Stomach (tissue), 19 donors: ENCODE measurements at regions of chr11 and their contacts with region 1.

Region 1: GRCh38 chr11:62542750-62543567 is 3.6 kb downstream of the AHNAK start:
- DNase-seq: peak; percentile 80 to 93
- H3K4me3 ChIP-seq: peak overlapping the region; percentile 83 to 95 (median 88)
- H3K27ac ChIP-seq: peak overlapping the region; percentile 93 to 99 (median 96)
- H3K4me1 ChIP-seq: peaks cover 69 to 82% (median 80%) of the 10 kb centered on the region in 4 donors
- H3K27me3 ChIP-seq: no peaks in the 10 kb centered on the region
- CTCF ChIP-seq: peak in 6 of 7 experiments; percentile 94 to 100 (median 98)
- EP300 ChIP-seq: no peak
- POLR2A ChIP-seq: no peak

Region 2: DNA sequence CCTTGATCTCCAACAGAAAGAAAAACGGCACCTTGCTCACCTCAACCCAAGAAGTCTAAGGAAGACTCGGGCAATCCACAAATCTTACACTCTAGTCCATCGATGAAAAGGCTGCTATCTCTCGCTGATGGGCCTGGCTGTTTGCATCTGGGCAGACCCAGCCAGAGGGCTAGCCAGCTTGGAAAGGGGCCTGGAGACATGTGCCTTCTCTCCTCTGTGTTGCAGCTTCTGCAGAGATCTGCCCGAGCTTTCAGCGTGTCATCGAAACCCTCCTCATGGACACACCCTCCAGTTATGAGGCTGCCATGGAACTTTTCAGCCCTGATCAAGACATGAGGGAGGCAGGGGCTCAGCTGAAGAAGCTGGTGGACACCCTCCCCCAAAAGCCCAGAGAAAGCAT is 121.0 kb before region 1 on chr11:
- intact Hi-C with region 1: loop called (anchors 5 kb)
- DNase-seq: peak in 1 of 2 donors; percentile 34
- H3K4me3 ChIP-seq: no peak overlapping the region
- H3K27ac ChIP-seq: no peak overlapping the region
- H3K4me1 ChIP-seq: peaks cover 19 to 47% (median 31%) of the 10 kb centered on the region in 4 donors
- H3K27me3 ChIP-seq: no peaks in the 10 kb centered on the region
- CTCF ChIP-seq: no peak
- EP300 ChIP-seq: no peak
- POLR2A ChIP-seq: no peak